Activated CD8-positive, alpha-beta T cell treated with anti-CD3 and anti-CD28 coated beads, Interleukin-2, amount 10 ng/mL, durations not matched to agents 7 days and 5 days (primary cell): ENCODE measurements at regions of chr1 and their contacts with region 1.

Region 1: GRCh38 chr1:100265931-100266740 is at the start of gene RTCA:
- DNase-seq: peak; percentile 96
- ATAC-seq: peak; percentile 94
- H3K4me3 Mint-ChIP-seq: peak within 1 kb of the TSS; percentile 100
- H3K27ac Mint-ChIP-seq: peak within 1 kb of the TSS; percentile 99
- H3K4me1 Mint-ChIP-seq: peaks cover 38% of the 10 kb centered on the region
- H3K27me3 Mint-ChIP-seq: no peaks in the 10 kb centered on the region
- total RNA-seq, gene RTCA: 51.6 to 51.7 TPM

Region 2: GRCh38 chr1:100229681-100230443 is 36.3 kb before region 1 on chr1:
- CTCF ChIA-PET with region 1: no interaction called
- POLR2A ChIA-PET with region 1: no interaction called
- DNase-seq: no peak
- ATAC-seq: no peak
- H3K4me3 Mint-ChIP-seq: no peak overlapping the region
- H3K27ac Mint-ChIP-seq: no peak overlapping the region
- H3K4me1 Mint-ChIP-seq: no peaks in the 10 kb centered on the region
- H3K27me3 Mint-ChIP-seq: no peaks in the 10 kb centered on the region

Region 3: DNA sequence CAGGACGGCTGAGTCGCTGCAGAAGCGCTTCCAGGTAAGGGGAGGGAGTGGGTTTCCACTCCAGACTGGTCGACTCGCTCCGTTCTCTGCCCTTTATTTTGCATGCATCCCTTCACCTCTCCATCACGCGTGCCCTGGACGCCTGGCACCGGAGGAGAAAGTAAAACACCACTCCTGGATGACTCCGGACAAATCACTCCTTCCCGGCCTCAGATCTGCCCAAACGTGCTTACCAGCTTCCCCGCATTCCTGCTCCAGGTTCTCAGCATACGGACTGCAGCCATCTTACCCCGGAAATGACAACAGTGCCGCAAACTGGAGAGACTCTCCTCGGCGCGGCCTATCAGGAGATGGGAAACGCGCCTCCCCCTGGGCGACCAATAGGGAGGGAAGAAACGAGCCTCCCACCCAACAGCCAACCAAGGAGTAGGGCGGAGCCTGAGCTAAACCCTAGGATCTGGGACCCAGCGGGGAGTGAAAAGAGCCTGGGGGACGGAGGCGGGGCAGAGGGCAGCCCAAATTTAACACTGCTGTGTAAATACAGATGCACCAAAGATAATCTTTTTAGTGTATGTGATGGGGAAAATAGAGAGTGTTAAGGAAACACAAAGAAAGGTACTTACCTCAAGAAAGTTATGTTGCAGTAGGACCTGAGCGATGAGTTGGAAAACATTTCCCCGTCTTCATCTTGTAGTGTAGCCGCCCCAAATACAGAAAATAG is 16.4 kb before region 1 on chr1 and contains the start of gene DBT:
- CTCF ChIA-PET with region 1: interaction called, 6 read pairs
- POLR2A ChIA-PET with region 1: interaction called, 45 read pairs
- DNase-seq: peak; percentile 96
- ATAC-seq: peak; percentile 100
- H3K4me3 Mint-ChIP-seq: no peak within 1 kb of the TSS
- H3K27ac Mint-ChIP-seq: no peak within 1 kb of the TSS
- H3K4me1 Mint-ChIP-seq: peaks cover 6% of the 10 kb centered on the region
- H3K27me3 Mint-ChIP-seq: peaks cover 6% of the 10 kb centered on the region
- total RNA-seq, gene DBT: 10.0 to 11.2 TPM